ENCODE measurements at regions of chr6 and their contacts with region 1.

Region 1: DNA sequence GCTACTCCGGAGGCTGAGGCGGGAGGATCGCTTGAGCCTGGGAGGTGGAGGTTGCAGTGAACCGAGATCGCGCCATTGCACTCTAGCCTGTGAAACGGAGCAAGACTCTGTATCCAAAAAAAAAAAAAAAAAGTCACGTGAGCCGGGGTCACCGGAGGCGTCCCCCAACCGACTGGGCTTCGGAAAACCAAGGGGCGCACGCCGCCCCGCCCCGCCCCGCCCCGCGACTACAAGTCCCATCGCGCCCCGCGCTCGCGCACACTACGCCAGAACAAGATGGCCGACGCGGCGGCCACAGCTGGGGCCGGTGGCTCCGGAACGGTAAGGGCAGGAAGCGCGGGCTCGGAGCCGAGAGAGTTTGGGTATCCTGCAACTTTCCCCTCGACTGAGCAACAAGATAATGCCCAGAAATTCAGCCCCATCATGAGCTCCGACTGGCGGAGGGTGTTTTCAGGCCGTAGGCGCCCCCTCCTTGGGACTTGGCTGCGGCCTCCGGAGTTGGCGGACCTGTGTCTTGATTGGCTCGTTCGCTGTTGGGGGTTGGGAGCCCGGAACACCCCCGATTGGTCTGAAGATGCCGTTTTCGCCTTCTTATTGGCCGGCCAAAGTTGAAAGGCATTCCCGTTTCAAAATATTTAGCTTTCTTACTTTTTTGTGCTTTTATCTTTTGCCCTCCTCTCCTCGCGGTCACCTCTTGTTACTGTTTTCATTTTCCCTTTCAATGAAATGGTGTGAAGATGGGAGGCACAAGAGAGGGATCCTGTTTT is at the start of gene TAF8:
- DNase-seq: peak; percentile 52
- H3K4me3 ChIP-seq: peak within 1 kb of the TSS; percentile 66
- H3K27me3 ChIP-seq: peaks cover 8% of the 10 kb centered on the region
- CTCF ChIP-seq: no peak
- polyA plus RNA-seq, gene TAF8: 11.9 and 13.9 TPM in 2 replicates

Region 2: DNA sequence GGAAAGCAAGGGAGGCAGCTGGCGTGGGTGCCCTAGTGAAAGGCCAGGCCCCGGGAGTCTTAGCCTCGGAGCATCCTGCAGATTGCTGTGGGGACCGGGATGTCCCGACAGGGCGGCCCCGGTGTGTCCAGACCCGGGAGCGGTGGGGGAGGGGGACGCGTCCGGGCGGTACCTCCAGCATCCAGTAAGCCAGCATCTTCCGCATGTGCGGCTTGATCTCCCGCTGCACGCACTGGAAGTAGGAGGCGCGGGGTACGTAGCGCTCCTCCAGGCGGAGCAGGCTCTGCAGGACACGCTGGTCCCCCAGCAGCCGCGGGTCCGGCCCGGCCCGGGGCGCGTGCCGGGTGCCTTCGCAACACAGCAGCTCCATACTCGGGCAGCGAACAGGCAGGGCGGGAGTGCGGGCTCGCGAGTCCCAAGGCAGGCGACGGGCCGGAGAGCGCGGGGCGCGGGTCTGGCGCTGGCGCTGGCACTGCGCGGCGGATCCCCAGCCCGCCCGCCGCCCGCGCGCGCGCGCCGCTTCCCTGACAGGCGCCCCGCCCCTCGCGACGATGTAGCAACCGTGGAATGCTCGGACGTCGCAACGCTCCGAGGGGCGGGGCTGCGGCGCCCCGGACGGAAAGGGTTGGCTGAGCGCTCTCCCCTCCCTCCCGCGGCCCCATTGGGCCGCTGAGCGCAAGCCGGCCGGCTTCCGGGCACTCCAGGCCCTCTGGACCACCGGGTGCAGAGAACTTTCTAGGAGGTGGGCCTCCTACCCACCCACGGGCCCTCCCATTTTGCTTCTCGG is 109.0 kb before region 1 on chr6 and contains the start of gene CCND3:
- CTCF ChIA-PET with region 1: interaction called, 152 read pairs
- POLR2A ChIA-PET with region 1: no interaction called
- DNase-seq: peak; percentile 55
- H3K4me3 ChIP-seq: peak within 1 kb of the TSS; percentile 81
- H3K27me3 ChIP-seq: no peaks in the 10 kb centered on the region
- CTCF ChIP-seq: no peak
- polyA plus RNA-seq, gene CCND3: 20.0 and 38.5 TPM in 2 replicates